ENCODE measurements at regions of chr14 and their contacts with region 1.

Region 1: GRCh38 chr14:39232554-39233415 is 930 bp upstream of the MIA2 start:
- DNase-seq: no peak
- ATAC-seq: peak; percentile 10
- H3K4me3 Mint-ChIP-seq: peak overlapping the region; percentile 47
- H3K27ac Mint-ChIP-seq: peak overlapping the region; percentile 83
- H3K4me1 Mint-ChIP-seq: peaks cover 57% of the 10 kb centered on the region
- H3K27me3 Mint-ChIP-seq: no peaks in the 10 kb centered on the region

Region 2: DNA sequence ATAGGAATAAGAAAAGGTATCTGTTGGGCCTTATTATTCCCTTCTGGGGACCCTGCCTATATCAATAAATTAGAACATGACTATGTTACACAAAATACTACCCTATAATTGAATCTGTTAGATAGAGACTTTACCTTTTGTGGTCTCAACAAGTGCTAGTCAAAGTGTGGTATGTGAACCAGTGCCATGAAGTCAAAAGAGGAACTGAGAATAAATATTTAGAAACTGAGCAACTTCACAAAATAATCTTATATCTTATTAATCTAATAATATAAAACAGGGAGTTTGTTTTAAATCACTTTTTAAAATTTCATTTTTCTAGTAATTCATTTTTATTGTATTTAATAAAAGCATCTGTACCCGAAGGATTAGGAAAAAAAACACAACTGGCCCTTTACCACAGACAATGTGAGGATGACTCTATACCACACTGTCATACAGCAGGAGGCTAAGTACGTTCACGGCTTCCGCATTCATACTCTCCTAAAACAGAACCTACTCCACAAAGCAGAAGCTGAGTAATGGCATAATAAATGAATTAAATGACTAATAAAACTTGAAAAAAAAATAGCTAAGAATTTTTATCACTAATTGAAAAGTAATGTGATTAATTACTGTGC is 171.9 kb before region 1 on chr14:
- CTCF ChIA-PET with region 1: no interaction called
- POLR2A ChIA-PET with region 1: no interaction called
- DNase-seq: no peak
- ATAC-seq: no peak
- H3K4me3 Mint-ChIP-seq: no peak overlapping the region
- H3K27ac Mint-ChIP-seq: no peak overlapping the region
- H3K4me1 Mint-ChIP-seq: no peaks in the 10 kb centered on the region
- H3K27me3 Mint-ChIP-seq: no peaks in the 10 kb centered on the region

Region 3: DNA sequence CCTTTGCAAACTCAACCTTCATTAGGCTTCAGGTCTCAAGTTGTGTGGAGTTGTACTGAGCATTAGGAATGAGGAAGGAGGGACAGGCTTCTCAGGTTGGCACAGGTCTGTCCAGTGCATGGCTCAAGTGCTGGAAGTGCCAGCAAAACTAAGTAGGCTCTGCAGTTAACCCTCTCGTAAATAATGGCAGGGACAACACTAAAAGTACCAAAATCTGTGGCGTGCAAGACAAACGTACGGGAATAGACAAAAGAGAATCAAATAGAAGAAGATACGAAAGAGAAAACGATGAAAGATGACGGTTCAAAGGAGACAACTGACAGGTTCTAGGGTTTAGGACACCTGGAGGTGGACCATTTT is 63.3 kb before region 1 on chr14:
- CTCF ChIA-PET with region 1: interaction called, 5 read pairs
- POLR2A ChIA-PET with region 1: interaction called, 15 read pairs
- DNase-seq: no peak
- ATAC-seq: peak; percentile 4
- H3K4me3 Mint-ChIP-seq: peak overlapping the region; percentile 82
- H3K27ac Mint-ChIP-seq: peak overlapping the region; percentile 98
- H3K4me1 Mint-ChIP-seq: peaks cover 44% of the 10 kb centered on the region
- H3K27me3 Mint-ChIP-seq: no peaks in the 10 kb centered on the region

Region 4: DNA sequence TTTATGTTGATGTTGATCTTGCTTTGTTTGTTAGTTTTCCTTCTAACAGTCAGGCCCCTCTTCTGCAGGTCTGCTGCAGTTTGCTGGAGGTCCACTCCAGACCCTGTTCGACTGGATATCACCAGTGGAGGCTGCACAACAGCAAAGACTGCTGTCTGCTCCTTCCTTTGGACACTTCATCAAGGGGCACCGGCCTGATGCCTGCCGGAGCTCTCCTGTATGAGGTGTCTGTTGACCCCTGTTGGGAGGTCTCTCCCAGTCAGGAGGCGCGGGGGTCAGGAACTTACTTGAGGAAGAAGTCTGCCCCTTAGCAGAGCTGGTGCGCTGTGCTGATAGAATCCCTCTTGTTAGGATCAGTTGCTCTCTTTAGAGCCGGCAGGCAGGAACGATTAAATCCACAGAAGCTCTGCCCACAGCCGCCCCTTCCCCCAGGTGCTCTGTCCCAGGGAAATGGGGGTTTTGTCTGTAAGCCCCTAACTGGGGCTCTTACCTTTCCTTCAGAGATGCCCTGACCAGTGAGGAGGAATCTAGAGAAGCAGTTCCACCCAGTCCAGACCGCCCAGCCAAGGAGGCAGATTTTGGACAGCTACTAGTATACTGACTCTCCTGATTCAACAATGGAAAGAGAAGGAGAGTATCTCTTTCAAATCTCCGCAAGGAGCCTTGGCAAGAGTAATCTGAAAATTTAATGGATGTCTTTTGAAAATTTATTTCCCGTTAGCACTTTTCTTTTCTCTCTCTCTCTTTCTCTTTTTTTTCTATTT is 26.2 kb after region 1 on chr14:
- CTCF ChIA-PET with region 1: interaction called, 17 read pairs
- POLR2A ChIA-PET with region 1: no interaction called
- DNase-seq: no peak
- ATAC-seq: no peak
- H3K4me3 Mint-ChIP-seq: no peak overlapping the region
- H3K27ac Mint-ChIP-seq: no peak overlapping the region
- H3K4me1 Mint-ChIP-seq: no peaks in the 10 kb centered on the region
- H3K27me3 Mint-ChIP-seq: no peaks in the 10 kb centered on the region

Region 5: GRCh38 chr14:39322807-39323206 is 90.0 kb after region 1 on chr14:
- CTCF ChIA-PET with region 1: no interaction called
- POLR2A ChIA-PET with region 1: no interaction called
- DNase-seq: no peak
- ATAC-seq: no peak
- H3K4me3 Mint-ChIP-seq: no peak overlapping the region
- H3K27ac Mint-ChIP-seq: no peak overlapping the region
- H3K4me1 Mint-ChIP-seq: no peaks in the 10 kb centered on the region
- H3K27me3 Mint-ChIP-seq: no peaks in the 10 kb centered on the region

Region 6: DNA sequence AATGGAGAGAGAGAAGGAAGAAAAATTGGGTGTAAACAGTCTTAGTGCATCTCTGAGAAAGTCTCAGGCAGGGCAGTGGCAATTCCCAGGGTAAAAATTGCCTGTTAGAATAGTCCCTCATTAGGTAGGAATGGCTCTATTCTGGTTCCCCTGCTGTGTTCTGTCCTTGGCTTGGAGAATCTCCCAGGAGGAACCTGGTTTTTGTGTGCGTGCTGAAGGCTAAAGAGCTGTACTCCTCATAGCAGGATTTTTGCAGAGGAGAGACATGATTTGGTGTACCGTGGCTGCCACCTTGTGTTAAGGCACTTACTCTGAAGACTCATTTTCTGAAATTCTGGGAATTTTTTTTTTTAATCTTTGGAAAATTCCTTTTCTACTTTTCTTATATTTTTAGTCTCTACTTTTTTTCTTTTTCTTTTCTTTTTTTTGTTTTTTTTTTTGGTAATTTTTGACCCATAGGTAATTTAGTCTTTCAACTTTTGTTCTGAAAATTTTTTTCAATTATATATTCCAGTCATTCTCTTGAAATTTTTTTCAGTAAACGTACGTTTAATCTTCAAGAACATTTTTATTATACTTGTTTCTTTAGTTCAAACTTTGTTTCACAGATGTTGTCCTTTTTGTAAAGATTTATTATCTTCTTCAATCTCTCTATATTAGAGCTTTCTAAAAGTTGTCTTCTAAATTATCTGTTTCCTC is 135.6 kb after region 1 on chr14:
- CTCF ChIA-PET with region 1: interaction called, 24 read pairs
- POLR2A ChIA-PET with region 1: interaction called, 4 read pairs
- DNase-seq: peak; percentile 63
- ATAC-seq: no peak
- H3K4me3 Mint-ChIP-seq: no peak overlapping the region
- H3K27ac Mint-ChIP-seq: no peak overlapping the region
- H3K4me1 Mint-ChIP-seq: no peaks in the 10 kb centered on the region
- H3K27me3 Mint-ChIP-seq: no peaks in the 10 kb centered on the region

Region 7: DNA sequence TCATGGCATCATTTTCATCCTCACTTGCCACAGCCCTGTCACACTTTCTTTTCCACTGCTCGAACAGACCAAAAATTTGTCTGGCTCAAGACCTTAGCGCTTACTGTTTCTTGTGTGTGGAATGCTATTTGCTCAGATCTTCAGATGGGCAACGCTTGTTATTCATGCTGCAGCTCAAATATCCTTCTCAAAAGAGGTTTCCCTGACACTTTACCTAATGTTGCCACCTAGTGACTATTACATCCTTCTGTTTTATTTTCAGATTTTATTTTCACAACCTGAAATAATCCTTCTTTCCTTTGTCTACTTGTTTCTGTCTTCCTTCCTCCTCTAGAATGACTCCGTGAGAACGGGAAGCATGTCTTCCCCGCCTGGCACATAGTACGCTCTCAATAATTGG is 193.8 kb after region 1 on chr14:
- CTCF ChIA-PET with region 1: interaction called, 46 read pairs
- POLR2A ChIA-PET with region 1: interaction called, 42 read pairs
- DNase-seq: no peak
- ATAC-seq: no peak
- H3K4me3 Mint-ChIP-seq: no peak overlapping the region
- H3K27ac Mint-ChIP-seq: no peak overlapping the region
- H3K4me1 Mint-ChIP-seq: peaks cover 46% of the 10 kb centered on the region
- H3K27me3 Mint-ChIP-seq: no peaks in the 10 kb centered on the region

Measured in activated CD8-positive, alpha-beta T cell treated with anti-CD3 and anti-CD28 coated beads, Interleukin-2, amount 10 ng/mL, durations not matched to agents 7 days and 5 days (primary cell).